BJ (cell line): ENCODE measurements at regions of chr19 and their contacts with region 1.

Region 1: GRCh38 chr19:45670670-45671453 is 2.8 kb downstream of the GIPR start:
- DNase-seq: no peak
- H3K4me3 ChIP-seq: peak overlapping the region; percentile 29
- H3K27me3 ChIP-seq: peaks cover 1% of the 10 kb centered on the region; the same call in 1 of the 2 replicates
- CTCF ChIP-seq: no peak

Region 2: DNA sequence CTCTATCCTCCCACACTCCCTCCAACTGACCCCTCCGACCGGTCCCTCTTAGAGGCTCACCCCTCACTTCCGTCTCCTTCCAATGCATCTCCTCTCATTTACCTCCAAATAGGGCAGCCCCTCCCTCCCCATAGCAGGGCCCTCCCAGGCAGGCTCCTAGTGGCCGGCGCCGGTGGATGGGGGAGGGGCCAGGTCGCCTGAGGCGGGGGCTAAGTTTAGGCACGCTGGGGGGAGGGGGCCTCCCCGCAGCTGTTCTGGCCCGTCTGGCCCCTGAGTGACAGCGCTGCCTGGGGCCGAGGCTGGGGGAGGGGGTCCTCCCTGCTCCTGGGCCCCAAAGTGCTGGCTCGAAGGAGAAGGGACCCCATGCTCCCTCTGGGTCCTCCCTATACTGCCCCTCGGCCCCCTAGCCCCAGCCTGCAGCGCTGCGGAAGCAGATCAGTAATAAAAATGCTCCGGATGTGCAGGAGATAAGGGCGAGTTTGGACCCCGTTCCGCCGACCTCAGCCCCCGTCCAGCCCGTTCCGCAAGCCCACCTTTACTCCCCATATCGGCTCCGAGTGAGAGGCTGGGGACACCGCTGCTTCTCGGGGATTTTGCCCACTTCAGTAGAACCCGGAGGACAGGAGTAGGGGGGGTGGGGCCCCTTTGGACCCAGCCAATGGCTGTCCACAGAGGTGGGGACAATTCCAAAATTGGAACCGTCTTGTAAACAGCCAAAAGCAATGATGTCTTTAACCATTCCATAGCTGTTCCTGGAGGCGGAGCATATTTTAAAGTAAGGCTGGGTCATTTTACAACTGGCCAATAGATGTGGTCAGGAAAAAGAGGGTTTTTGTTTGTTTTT is 178.0 kb before region 1 on chr19:
- CTCF ChIA-PET with region 1: no interaction called
- POLR2A ChIA-PET with region 1: no interaction called
- DNase-seq: peak; percentile 47
- H3K4me3 ChIP-seq: peak overlapping the region; percentile 75
- H3K27me3 ChIP-seq: no peaks in the 10 kb centered on the region
- CTCF ChIP-seq: no peak

Region 3: GRCh38 chr19:45506246-45506990 is 164.4 kb before region 1 on chr19:
- CTCF ChIA-PET with region 1: no interaction called
- POLR2A ChIA-PET with region 1: interaction called, 10 read pairs
- DNase-seq: no peak
- H3K4me3 ChIP-seq: peak overlapping the region; percentile 59
- H3K27me3 ChIP-seq: no peaks in the 10 kb centered on the region
- CTCF ChIP-seq: peak; percentile 72

Region 4: DNA sequence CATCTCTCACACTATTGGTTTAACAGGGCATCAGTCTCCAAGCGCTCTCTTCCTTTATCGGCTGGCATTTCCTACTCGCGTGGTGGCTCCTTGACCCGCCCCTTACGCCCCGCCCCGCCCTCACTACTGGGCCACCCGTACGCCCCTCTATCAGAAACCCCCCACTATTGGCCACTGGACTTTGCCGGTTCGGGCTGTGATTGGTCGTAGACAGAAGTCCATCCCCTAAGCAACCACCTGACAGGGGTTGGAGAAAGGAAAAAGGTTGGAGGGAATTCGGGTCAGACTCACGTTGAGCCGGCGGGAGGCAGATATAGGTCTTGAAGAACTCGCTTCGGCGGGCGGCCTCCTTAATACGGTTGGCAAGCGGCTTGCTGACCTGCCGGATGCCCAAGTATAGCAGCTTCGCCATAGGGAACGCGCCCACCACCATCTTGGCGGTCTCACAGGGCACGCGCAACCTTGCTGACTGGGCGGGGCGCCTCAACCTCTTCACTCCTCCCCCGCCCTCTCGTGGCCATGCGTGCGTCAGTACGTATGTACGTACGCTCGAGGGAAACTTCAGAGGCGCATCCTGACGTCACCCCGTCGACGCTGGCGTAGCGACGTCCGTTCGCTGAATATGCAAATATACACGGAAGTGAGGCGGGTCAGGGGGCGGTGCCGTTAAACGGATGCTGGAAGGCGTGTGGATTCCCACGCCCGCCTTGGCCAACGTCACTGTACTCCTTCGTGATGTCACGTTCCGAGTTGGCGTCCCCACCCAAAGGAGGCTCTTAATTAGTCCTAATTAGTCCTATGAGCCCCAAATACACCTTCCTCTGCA is 86.3 kb before region 1 on chr19 and contains the start of gene OPA3:
- CTCF ChIA-PET with region 1: no interaction called
- POLR2A ChIA-PET with region 1: no interaction called
- DNase-seq: peak; percentile 99
- H3K4me3 ChIP-seq: peak within 1 kb of the TSS; percentile 69
- H3K27me3 ChIP-seq: no peaks in the 10 kb centered on the region
- CTCF ChIP-seq: no peak
- polyA plus RNA-seq, gene OPA3: 10.9 and 15.1 TPM in 2 replicates

Region 5: DNA sequence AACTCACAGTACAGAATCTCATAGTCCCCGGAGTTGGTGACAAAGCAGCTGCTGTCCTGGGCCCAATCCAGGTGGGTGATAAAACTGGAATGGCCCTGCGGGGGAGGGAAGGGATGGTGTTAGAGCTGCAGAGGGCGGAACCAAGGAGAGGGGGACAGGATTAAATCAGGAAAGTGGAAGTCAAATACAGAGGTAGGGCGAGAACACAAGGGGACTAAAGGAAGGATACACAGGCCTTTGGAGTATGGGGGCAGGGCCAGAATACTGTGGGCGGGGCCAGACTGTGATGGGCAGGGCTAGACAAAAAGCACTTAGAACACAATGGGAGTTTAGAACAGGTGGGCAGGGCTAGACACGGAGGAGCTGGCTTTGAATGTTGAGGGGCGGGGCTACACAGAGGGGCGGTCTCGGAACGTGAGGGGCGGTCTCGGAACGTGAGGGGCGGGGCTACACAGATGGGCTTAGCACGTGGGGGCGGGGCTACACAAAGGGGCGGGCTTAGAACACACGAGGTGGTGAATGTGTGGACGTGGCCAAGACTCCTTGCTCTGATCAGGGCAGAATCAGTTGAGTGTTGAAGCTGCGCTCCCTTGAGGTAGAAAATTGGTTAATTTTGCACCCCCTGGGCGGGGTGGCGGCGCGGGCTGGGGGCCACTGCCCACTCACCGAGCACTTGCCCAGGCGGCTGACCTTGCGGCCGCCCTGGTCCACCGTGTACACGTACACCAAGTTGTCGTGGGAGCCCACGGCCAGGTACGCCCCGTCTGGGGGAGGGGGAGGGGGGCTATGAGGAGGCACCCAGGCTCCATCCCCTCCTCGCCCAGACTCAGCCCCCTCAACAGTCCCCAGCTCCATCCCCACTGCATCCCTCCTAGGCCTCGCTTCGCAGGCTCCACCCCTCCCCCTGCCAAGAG is 54.8 kb before region 1 on chr19:
- CTCF ChIA-PET with region 1: no interaction called
- POLR2A ChIA-PET with region 1: interaction called, 15 read pairs
- DNase-seq: no peak
- H3K4me3 ChIP-seq: no peak overlapping the region
- H3K27me3 ChIP-seq: no peaks in the 10 kb centered on the region
- CTCF ChIP-seq: no peak

Region 6: DNA sequence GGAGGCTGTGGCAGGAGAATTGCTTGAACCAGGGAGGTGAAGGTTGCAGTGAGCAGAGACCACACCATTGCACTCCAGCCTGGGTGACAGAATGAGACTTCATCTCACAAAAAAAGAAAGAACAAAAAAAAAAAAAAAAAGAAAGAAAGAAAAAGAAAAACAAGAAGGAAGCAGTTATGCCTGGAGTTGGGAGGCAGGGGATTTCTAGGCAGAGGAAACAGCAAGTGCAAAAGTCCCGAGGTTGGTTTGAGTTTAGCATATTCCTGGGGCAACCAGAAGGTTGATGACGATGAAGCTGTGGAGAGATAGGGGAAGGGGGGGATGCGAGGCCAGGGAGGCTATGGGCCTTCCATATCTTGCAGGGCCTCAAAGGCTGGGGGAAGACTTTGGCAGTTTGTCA is 20.1 kb before region 1 on chr19:
- CTCF ChIA-PET with region 1: no interaction called
- POLR2A ChIA-PET with region 1: no interaction called
- DNase-seq: no peak
- H3K4me3 ChIP-seq: no peak overlapping the region
- H3K27me3 ChIP-seq: no peaks in the 10 kb centered on the region; the same call in 1 of the 2 replicates
- CTCF ChIP-seq: no peak

Region 7: GRCh38 chr19:45681391-45682015 is 10.6 kb after region 1 on chr19:
- CTCF ChIA-PET with region 1: interaction called, 22 read pairs
- POLR2A ChIA-PET with region 1: interaction called, 3 read pairs
- DNase-seq: no peak
- H3K4me3 ChIP-seq: peak overlapping the region; percentile 39
- H3K27me3 ChIP-seq: no peaks in the 10 kb centered on the region
- CTCF ChIP-seq: peak; percentile 91